Endothelial cell of umbilical vein (primary cell): ENCODE measurements at regions of chr9 and their contacts with region 1.

Region 1: GRCh38 chr9:33076358-33077004 is at the start of gene SMU1:
- DNase-seq: peak; percentile 99
- H3K4me3 ChIP-seq: peak within 1 kb of the TSS; percentile 54 to 87 (median 59)
- H3K27ac ChIP-seq: peak within 1 kb of the TSS; percentile 83
- H3K4me1 ChIP-seq: peaks cover 15% of the 10 kb centered on the region
- H3K27me3 ChIP-seq: no peaks in the 10 kb centered on the region
- CTCF ChIP-seq: no peak
- POLR2A ChIP-seq: peak; percentile 69
- total RNA-seq, gene SMU1: 21.7 and 22.2 TPM in 2 replicates

Region 2: GRCh38 chr9:32823551-32823950 is 252.9 kb before region 1 on chr9:
- CTCF ChIA-PET with region 1: no interaction called
- POLR2A ChIA-PET with region 1: no interaction called
- dilution Hi-C with region 1: no loop called
- intact Hi-C with region 1: no loop called
- DNase-seq: no peak
- H3K4me3 ChIP-seq: no peak overlapping the region
- H3K27ac ChIP-seq: no peak overlapping the region
- H3K4me1 ChIP-seq: no peaks in the 10 kb centered on the region
- H3K27me3 ChIP-seq: no peaks in the 10 kb centered on the region
- CTCF ChIP-seq: no peak
- POLR2A ChIP-seq: no peak

Region 3: GRCh38 chr9:33106827-33107621 is 30.5 kb after region 1 on chr9:
- CTCF ChIA-PET with region 1: no interaction called
- POLR2A ChIA-PET with region 1: no interaction called
- dilution Hi-C with region 1: no loop called
- intact Hi-C with region 1: loop called (anchors 1 kb)
- DNase-seq: peak; percentile 85
- H3K4me3 ChIP-seq: no peak overlapping the region
- H3K27ac ChIP-seq: peak overlapping the region; percentile 87
- H3K4me1 ChIP-seq: peaks cover 22% of the 10 kb centered on the region
- H3K27me3 ChIP-seq: no peaks in the 10 kb centered on the region
- CTCF ChIP-seq: no peak
- POLR2A ChIP-seq: peak; percentile 41

Region 4: DNA sequence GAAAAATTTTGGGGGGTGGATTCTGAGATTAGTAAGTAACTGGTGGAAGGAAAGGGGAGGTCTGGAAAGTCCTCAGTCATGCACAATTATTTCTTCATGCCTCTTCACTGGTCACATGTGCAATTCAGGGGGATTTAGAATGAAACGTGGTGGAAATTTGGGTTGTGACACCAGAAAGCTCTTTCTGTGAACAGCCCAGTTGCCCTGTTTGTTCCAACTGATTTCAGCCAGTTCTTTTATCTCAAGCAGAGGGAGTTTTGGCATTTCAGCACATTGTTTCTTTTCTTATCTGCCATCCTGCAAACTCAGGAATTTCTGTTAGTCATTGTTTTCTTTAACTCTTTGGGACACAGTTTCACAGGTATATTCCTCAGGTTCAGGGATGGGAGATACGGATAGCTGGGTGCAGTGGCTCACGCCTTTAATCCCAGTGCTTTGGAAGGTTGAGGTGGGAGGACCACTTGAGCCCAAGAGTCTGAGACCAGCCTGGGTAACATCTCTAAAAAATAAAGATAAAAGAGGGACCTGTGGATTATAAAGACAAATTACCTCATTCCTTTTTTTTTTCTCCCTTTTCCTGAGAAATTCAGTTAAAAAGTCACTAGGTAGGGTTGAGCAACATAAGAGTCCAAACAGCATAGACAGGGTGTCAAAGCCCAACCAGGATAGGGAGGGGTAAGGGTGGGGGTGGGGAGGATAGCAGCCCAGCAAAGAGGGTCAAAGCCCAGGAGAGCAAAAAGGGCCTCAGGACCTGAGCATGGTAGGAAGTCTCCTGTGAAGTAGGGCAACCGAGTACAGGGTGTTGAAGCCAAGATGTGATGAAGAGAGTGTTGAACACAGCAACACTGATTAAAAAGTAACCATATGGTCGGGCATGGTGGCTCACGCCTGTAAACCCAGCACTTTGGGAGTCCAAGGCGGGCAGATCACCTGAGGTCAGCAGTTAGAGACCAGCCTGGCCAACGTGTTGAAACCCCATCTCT is 96.1 kb after region 1 on chr9:
- CTCF ChIA-PET with region 1: interaction called, 6 read pairs
- POLR2A ChIA-PET with region 1: no interaction called
- dilution Hi-C with region 1: no loop called
- intact Hi-C with region 1: loop called (anchors 1 kb)
- DNase-seq: peak; percentile 93
- H3K4me3 ChIP-seq: no peak overlapping the region
- H3K27ac ChIP-seq: peak overlapping the region; percentile 67
- H3K4me1 ChIP-seq: peaks cover 19% of the 10 kb centered on the region
- H3K27me3 ChIP-seq: no peaks in the 10 kb centered on the region
- CTCF ChIP-seq: no peak
- POLR2A ChIP-seq: peak; percentile 54

Region 5: DNA sequence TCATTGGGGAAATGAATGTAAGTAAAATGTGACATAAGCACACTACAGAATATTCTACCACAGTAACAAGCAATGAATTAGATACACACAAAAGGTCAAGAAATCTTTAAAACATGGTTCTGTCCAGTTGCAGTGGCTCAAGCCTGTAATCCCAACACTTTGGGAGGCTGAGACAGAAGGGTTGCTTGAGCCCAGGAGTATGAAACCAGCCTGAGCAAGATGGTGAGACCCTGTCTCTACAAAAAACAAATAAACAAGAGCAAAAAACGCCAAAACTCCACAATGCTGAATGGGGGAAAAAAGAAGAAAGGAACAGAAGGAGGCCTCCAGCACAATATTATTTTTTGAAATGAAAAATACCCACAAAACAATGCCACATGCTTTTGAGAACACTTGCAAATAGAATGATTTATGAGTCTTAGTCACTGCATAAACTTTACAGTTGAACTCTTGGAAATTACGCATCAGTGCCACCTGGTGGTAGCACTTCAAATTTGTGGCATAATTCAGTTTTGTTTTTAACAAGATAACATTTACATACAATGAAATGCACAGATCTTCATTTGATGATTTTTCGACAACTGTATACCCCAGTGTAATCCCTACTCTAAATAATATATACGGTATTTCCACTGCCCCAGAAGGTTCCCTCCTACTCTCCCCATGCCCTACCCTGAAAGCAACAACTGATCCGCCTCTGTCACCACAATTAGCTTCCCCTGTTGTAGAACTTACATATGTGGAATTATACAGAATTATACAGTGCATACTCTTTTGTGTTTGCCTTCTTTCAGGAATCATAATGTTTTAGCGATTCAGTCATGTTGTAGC is 149.1 kb after region 1 on chr9:
- CTCF ChIA-PET with region 1: interaction called, 67 read pairs
- POLR2A ChIA-PET with region 1: no interaction called
- dilution Hi-C with region 1: no loop called
- intact Hi-C with region 1: loop called (anchors 1 kb)
- DNase-seq: peak; percentile 91
- H3K4me3 ChIP-seq: no peak overlapping the region
- H3K27ac ChIP-seq: no peak overlapping the region
- H3K4me1 ChIP-seq: peaks cover 9% of the 10 kb centered on the region
- H3K27me3 ChIP-seq: no peaks in the 10 kb centered on the region
- CTCF ChIP-seq: peak; percentile 41 to 55
- POLR2A ChIP-seq: no peak

Region 6: GRCh38 chr9:33264473-33265177 is 188.1 kb after region 1 on chr9 and contains the starts of genes BAG1 and CHMP5:
- CTCF ChIA-PET with region 1: interaction called, 5 read pairs
- POLR2A ChIA-PET with region 1: no interaction called
- dilution Hi-C with region 1: no loop called
- intact Hi-C with region 1: loop called (anchors 1 kb)
- DNase-seq: peak; percentile 100
- H3K4me3 ChIP-seq: peak within 1 kb of the TSS; percentile 37 to 96 (median 75)
- H3K27ac ChIP-seq: peak within 1 kb of the TSS; percentile 34
- H3K4me1 ChIP-seq: peaks cover 15% of the 10 kb centered on the region
- H3K27me3 ChIP-seq: no peaks in the 10 kb centered on the region
- CTCF ChIP-seq: peak; percentile 9 to 37
- POLR2A ChIP-seq: peak; percentile 85
- total RNA-seq, gene BAG1: 87.4 and 98.7 TPM in 2 replicates
- total RNA-seq, gene CHMP5: 54.5 and 55.8 TPM in 2 replicates